HepG2 (cell line): ENCODE measurements at regions of chr17 and their contacts with region 1.

Region 1: GRCh38 chr17:47315451-47316266 is 8.1 kb upstream of the EFCAB13 start:
- DNase-seq: peak; percentile 71
- ATAC-seq: peak; percentile 69
- H3K4me3 ChIP-seq: no peak overlapping the region
- H3K27ac ChIP-seq: no peak overlapping the region
- H3K4me1 ChIP-seq: peaks cover 35% of the 10 kb centered on the region
- H3K27me3 ChIP-seq: no peaks in the 10 kb centered on the region
- CTCF ChIP-seq: peak; percentile 90
- EP300 ChIP-seq: no peak
- POLR2A ChIP-seq: no peak
- RAD21 ChIP-seq: peak; percentile 85

Region 2: GRCh38 chr17:47188876-47189731 is 126.6 kb before region 1 on chr17 and contains the start of gene CDC27:
- CTCF ChIA-PET with region 1: no interaction called
- POLR2A ChIA-PET with region 1: no interaction called
- in situ Hi-C with region 1: no loop called
- intact Hi-C with region 1: loop called (anchors 5 kb)
- DNase-seq: peak; percentile 99
- ATAC-seq: peak; percentile 95
- H3K4me3 ChIP-seq: peak within 1 kb of the TSS; percentile 86 to 91 (median 89)
- H3K27ac ChIP-seq: peak within 1 kb of the TSS; percentile 90
- H3K4me1 ChIP-seq: peaks cover 59% of the 10 kb centered on the region
- H3K27me3 ChIP-seq: peaks cover 0 to 4% of the 10 kb centered on the region in 2 experiments; a peak in 1 of 5 replicates
- CTCF ChIP-seq: no peak; the same call in none of the 2 replicates
- EP300 ChIP-seq: no peak; a peak in 1 of 4 replicates
- POLR2A ChIP-seq: peak; percentile 78 to 83
- RAD21 ChIP-seq: peak; percentile 63; the same call in 1 of the 2 replicates
- total RNA-seq, gene CDC27: 102 and 162 TPM in 2 replicates

Region 3: GRCh38 chr17:47229535-47230443 is 85.9 kb before region 1 on chr17:
- CTCF ChIA-PET with region 1: interaction called, 65 read pairs
- POLR2A ChIA-PET with region 1: no interaction called
- in situ Hi-C with region 1: loop called (anchors 5 kb)
- intact Hi-C with region 1: loop called (anchors 1 kb)
- DNase-seq: peak; percentile 79
- ATAC-seq: peak; percentile 86
- H3K4me3 ChIP-seq: peak overlapping the region; percentile 44 to 62 (median 46)
- H3K27ac ChIP-seq: no peak overlapping the region
- H3K4me1 ChIP-seq: peaks cover 35% of the 10 kb centered on the region
- H3K27me3 ChIP-seq: peaks cover 1 to 16% of the 10 kb centered on the region in 2 experiments; a peak in 2 of 5 replicates
- CTCF ChIP-seq: peak; percentile 99
- EP300 ChIP-seq: no peak
- POLR2A ChIP-seq: no peak
- RAD21 ChIP-seq: peak; percentile 98